ENCODE measurements at regions of chr1 and their contacts with region 1.

Region 1: GRCh38 chr1:99808391-99809115 is 41.6 kb upstream of the AGL start:
- DNase-seq: peak; percentile 43 to 60 (median 57)
- H3K4me3 ChIP-seq: no peak overlapping the region
- H3K4me3 Mint-ChIP-seq: peak overlapping the region in 1 of 8 donors; percentile 4
- H3K27ac ChIP-seq: no peak overlapping the region
- H3K27ac Mint-ChIP-seq: peak overlapping the region in 1 of 7 donors; percentile 13
- H3K4me1 ChIP-seq: no peaks in the 10 kb centered on the region
- H3K4me1 Mint-ChIP-seq: peaks cover 0 to 6% (median 3%) of the 10 kb centered on the region in 4 donors
- H3K27me3 ChIP-seq: no peaks in the 10 kb centered on the region
- H3K27me3 Mint-ChIP-seq: peaks cover 10 to 13% of the 10 kb centered on the region in 2 donors

Region 2: GRCh38 chr1:99855914-99856450 is 47.4 kb after region 1 on chr1:
- CTCF ChIA-PET with region 1: no interaction called
- POLR2A ChIA-PET with region 1: no interaction called
- intact Hi-C with region 1: no loop called
- DNase-seq: no peak
- H3K4me3 ChIP-seq: no peak overlapping the region
- H3K4me3 Mint-ChIP-seq: no peak overlapping the region
- H3K27ac ChIP-seq: no peak overlapping the region
- H3K27ac Mint-ChIP-seq: no peak overlapping the region
- H3K4me1 ChIP-seq: peaks cover 6% of the 10 kb centered on the region
- H3K4me1 Mint-ChIP-seq: peaks cover 10 to 16% (median 14%) of the 10 kb centered on the region in 4 donors
- H3K27me3 ChIP-seq: no peaks in the 10 kb centered on the region
- H3K27me3 Mint-ChIP-seq: no peaks in the 10 kb centered on the region

Region 3: DNA sequence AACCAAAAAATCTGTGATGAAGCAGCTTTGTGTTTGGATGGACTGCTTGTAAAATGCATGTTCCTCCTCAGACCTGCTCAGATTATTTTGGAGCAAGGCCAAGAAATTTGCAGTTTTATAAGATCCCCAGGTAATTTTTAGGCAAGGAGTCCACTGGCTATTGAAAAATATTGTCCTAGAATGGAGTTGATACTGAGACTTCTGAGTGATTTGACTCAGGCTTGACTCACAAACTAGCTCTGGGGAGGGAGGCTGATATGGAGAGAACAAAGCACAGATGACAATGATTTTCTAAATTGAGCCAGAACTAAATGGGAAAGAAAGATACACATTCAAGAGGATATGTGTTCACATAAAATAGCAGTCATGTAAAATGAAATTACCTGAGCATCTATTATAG is 78.3 kb after region 1 on chr1:
- CTCF ChIA-PET with region 1: no interaction called
- POLR2A ChIA-PET with region 1: no interaction called
- intact Hi-C with region 1: no loop called
- DNase-seq: no peak
- H3K4me3 ChIP-seq: no peak overlapping the region
- H3K4me3 Mint-ChIP-seq: no peak overlapping the region
- H3K27ac ChIP-seq: no peak overlapping the region
- H3K27ac Mint-ChIP-seq: peak overlapping the region in 1 of 7 donors; percentile 31
- H3K4me1 ChIP-seq: no peaks in the 10 kb centered on the region
- H3K4me1 Mint-ChIP-seq: peaks cover 0 to 2% (median 0%) of the 10 kb centered on the region in 4 donors
- H3K27me3 ChIP-seq: no peaks in the 10 kb centered on the region
- H3K27me3 Mint-ChIP-seq: no peaks in the 10 kb centered on the region

Region 4: DNA sequence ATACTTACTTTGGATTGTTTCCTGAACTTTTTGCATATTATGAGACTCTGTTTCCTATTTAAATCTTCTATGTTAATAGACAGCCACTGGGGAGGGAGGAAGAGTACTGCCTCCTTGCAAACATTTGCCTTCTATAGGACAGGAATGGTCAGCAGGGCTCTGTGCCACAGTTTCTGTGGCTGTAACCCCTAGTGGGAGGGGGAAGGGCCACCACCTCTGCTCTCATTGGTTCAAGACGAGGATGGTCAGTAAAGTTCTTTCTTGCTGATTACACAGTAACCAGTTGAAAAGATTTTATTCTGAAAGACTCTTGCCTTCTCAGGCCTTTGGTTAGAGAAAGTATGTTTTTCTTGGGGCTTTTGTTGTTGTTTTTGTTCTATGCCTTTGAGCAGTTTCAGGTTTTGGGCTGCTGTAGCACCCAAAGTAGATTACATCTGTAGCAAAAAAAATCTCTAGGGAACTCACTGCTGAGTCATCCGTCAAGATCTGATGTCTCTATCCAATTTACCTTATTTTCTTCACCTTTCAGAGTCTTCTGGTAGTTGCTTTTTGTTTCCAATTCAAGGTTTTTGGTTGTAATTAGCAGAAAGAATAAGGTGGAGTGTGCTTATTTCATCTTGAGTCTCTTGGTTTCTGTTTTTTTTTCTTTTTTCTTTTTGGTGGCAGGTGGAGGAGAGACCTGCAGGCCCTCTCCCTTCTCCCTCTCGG is 184.4 kb after region 1 on chr1:
- CTCF ChIA-PET with region 1: no interaction called
- POLR2A ChIA-PET with region 1: no interaction called
- intact Hi-C with region 1: no loop called
- DNase-seq: no peak
- H3K4me3 ChIP-seq: no peak overlapping the region
- H3K4me3 Mint-ChIP-seq: no peak overlapping the region
- H3K27ac ChIP-seq: no peak overlapping the region
- H3K27ac Mint-ChIP-seq: no peak overlapping the region
- H3K4me1 ChIP-seq: no peaks in the 10 kb centered on the region
- H3K4me1 Mint-ChIP-seq: peaks cover 0 to 2% (median 0%) of the 10 kb centered on the region in 4 donors
- H3K27me3 ChIP-seq: no peaks in the 10 kb centered on the region
- H3K27me3 Mint-ChIP-seq: no peaks in the 10 kb centered on the region

Region 5: GRCh38 chr1:100265931-100266740 is 457.6 kb after region 1 on chr1 and contains the start of gene RTCA:
- CTCF ChIA-PET with region 1: no interaction called
- POLR2A ChIA-PET with region 1: no interaction called
- intact Hi-C with region 1: loop called (anchors 5 kb)
- DNase-seq: peak; percentile 93 to 97 (median 94)
- H3K4me3 ChIP-seq: peak within 1 kb of the TSS; percentile 77
- H3K4me3 Mint-ChIP-seq: peak within 1 kb of the TSS; percentile 99 to 100 (median 100)
- H3K27ac ChIP-seq: peak within 1 kb of the TSS; percentile 78
- H3K27ac Mint-ChIP-seq: peak within 1 kb of the TSS; percentile 96 to 99 (median 98)
- H3K4me1 ChIP-seq: peaks cover 44% of the 10 kb centered on the region
- H3K4me1 Mint-ChIP-seq: peaks cover 19 to 58% (median 39%) of the 10 kb centered on the region in 4 donors
- H3K27me3 ChIP-seq: no peaks in the 10 kb centered on the region
- H3K27me3 Mint-ChIP-seq: no peaks in the 10 kb centered on the region
- total RNA-seq, gene RTCA: 39.7 to 41.4 TPM

Region 6: DNA sequence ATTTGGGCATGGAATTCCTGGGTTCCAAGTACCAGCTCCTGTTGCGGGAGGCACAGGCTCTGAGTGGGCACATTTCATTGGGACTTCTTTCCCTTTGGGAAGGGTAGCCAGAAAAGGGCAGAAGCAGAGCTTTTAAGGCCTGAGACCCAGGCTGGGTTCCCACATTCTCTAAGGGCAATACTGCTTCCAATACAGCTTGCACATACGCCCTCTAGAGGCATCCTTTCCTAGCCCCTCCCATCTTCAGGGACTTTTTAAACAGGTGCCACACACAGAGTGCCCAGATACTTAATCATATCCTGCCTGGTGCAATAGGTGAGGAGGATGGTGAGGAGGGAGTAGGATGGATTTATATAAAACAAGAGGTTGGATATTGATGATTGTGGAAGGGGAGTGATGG is 735.1 kb after region 1 on chr1:
- CTCF ChIA-PET with region 1: interaction called, 3 read pairs
- POLR2A ChIA-PET with region 1: no interaction called
- intact Hi-C with region 1: loop called (anchors 5 kb)
- DNase-seq: peak; percentile 28 to 55 (median 33)
- H3K4me3 ChIP-seq: no peak overlapping the region
- H3K4me3 Mint-ChIP-seq: peak overlapping the region in 1 of 8 donors; percentile 60
- H3K27ac ChIP-seq: no peak overlapping the region
- H3K27ac Mint-ChIP-seq: peak overlapping the region in 1 of 7 donors; percentile 20
- H3K4me1 ChIP-seq: peaks cover 6% of the 10 kb centered on the region
- H3K4me1 Mint-ChIP-seq: peaks cover 2 to 8% (median 4%) of the 10 kb centered on the region in 4 donors
- H3K27me3 ChIP-seq: peaks cover 9% of the 10 kb centered on the region
- H3K27me3 Mint-ChIP-seq: peaks cover 12 to 21% of the 10 kb centered on the region in 2 donors

Region 7: DNA sequence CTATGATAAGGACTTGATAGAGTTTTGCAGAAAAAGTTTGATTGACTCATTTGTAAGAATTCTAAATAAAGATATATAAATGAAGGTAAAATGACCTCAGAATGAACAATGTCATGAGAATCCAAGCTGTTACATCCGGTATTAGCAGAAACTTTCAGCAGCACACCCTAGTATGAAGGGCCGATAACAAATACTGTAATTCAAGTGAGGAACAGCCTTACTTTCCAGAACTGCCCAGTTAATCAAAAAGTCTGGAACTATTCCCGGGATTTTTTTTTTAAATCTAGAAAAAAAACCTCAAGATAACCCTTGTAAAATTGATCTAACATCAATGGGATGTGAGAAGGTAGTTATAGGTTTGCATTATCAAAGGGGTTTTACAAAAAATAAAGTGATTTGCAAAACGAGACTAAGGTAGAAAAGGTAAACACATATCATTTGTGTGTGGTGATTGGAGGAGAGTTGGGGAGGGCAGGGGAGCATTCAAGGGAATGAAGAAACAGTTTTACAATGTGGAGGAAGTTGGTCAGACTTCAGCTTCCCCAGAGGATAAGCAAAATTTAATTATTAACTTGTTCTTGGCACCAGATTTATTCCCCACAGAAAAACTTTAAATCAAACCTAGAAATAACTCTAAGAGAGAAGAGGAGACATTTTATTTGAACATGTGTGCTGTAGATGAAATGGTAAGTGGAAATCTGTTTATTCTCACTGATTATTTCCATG is 835.1 kb after region 1 on chr1:
- CTCF ChIA-PET with region 1: no interaction called
- POLR2A ChIA-PET with region 1: no interaction called
- intact Hi-C with region 1: no loop called
- DNase-seq: no peak
- H3K4me3 ChIP-seq: no peak overlapping the region
- H3K4me3 Mint-ChIP-seq: no peak overlapping the region
- H3K27ac ChIP-seq: no peak overlapping the region
- H3K27ac Mint-ChIP-seq: no peak overlapping the region
- H3K4me1 ChIP-seq: no peaks in the 10 kb centered on the region
- H3K4me1 Mint-ChIP-seq: no peaks in the 10 kb centered on the region
- H3K27me3 ChIP-seq: no peaks in the 10 kb centered on the region
- H3K27me3 Mint-ChIP-seq: peaks cover 11 to 13% of the 10 kb centered on the region in 2 donors